ENCODE measurements at regions of chr7 and their contacts with region 1.

Region 1: DNA sequence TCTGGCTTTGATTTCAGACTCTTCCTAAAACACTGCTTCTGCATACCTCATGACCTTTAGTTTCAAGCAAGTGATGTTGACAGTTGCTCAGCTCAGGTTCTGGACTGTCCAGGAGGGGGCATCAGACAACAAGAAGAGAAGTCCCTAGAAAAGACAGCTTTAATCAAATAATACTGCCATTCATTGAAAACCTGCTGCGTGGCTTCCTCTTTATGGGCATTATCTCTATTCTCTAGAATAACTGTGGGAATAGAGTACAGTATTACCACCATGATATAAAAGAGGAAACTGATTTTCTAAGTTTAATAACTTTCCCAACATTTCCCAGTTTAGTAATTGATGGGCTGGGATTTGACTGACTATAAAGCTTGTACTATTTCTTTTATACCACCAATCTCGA is 170.4 kb downstream of the SNX13 start:
- H3K4me3 Mint-ChIP-seq: no peak overlapping the region
- H3K27ac Mint-ChIP-seq: peak overlapping the region; percentile 59
- H3K4me1 Mint-ChIP-seq: peaks cover 37% of the 10 kb centered on the region
- H3K27me3 Mint-ChIP-seq: no peaks in the 10 kb centered on the region

Region 2: GRCh38 chr7:17786314-17786852 is 16.5 kb after region 1 on chr7:
- intact Hi-C with region 1: loop called (anchors 1 kb)
- H3K4me3 Mint-ChIP-seq: no peak overlapping the region
- H3K27ac Mint-ChIP-seq: no peak overlapping the region
- H3K4me1 Mint-ChIP-seq: no peaks in the 10 kb centered on the region
- H3K27me3 Mint-ChIP-seq: no peaks in the 10 kb centered on the region

Region 3: GRCh38 chr7:17952387-17952786 is 182.5 kb after region 1 on chr7:
- intact Hi-C with region 1: loop called (anchors 5 kb)
- H3K4me3 Mint-ChIP-seq: no peak overlapping the region
- H3K27ac Mint-ChIP-seq: no peak overlapping the region
- H3K4me1 Mint-ChIP-seq: peaks cover 9% of the 10 kb centered on the region
- H3K27me3 Mint-ChIP-seq: no peaks in the 10 kb centered on the region

Region 4: GRCh38 chr7:17991866-17992648 is 222.1 kb after region 1 on chr7:
- intact Hi-C with region 1: loop called (anchors 10 kb)
- H3K4me3 Mint-ChIP-seq: no peak overlapping the region
- H3K27ac Mint-ChIP-seq: no peak overlapping the region
- H3K4me1 Mint-ChIP-seq: peaks cover 11% of the 10 kb centered on the region
- H3K27me3 Mint-ChIP-seq: no peaks in the 10 kb centered on the region